ENCODE measurements at regions of chr2 and their contacts with region 1.

Region 1: DNA sequence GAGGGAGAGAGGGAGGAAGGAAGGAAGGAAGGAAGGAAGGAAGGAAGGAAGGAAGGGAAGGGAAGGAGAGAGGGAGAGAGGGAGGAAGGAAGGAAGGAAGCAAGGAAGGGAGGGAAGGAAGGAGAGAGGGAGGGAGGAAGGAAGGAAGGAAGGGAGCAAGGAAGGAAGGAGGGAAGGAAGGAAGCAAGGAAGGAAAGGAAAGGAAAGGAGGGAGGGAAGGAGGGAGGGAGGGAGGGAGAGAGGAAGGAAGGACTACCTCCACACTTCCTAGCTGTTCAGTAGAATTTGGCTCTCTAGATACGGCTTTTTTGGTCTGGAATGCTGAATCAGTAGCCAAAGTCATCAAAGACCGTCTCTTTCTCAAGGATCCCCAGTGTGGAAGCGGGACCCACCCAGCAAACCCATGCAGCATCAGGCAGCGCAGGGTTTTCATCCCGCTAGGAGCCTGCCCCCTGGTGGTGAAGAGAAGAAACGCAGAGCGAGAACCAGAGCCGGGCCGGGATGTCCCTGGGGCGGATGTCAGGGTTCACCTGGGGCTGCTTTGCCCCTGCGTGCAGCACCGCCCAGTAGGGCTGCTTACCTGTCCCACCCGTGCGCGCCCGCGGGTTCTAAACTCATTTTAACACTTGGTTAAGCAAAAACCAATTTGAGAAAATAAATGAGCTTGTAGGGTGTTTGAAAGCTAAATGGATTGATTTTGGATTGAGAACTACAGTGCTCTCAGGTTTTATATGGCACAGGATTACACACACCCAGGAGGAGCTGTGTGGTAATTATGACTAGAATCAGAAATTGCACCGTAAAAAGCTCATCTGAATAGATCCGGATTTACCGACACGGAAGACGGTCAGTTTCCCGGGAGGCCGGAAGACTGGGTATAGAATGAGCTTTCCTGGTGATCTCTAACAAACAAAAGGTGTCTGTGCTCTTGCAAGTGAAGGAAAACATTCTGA is 48.1 kb upstream of the ARL4C start:
- DNase-seq: peak; percentile 85
- H3K4me3 Mint-ChIP-seq: no peak overlapping the region
- H3K27ac Mint-ChIP-seq: no peak overlapping the region
- H3K4me1 Mint-ChIP-seq: no peaks in the 10 kb centered on the region
- H3K27me3 Mint-ChIP-seq: peaks cover 4% of the 10 kb centered on the region

Region 2: DNA sequence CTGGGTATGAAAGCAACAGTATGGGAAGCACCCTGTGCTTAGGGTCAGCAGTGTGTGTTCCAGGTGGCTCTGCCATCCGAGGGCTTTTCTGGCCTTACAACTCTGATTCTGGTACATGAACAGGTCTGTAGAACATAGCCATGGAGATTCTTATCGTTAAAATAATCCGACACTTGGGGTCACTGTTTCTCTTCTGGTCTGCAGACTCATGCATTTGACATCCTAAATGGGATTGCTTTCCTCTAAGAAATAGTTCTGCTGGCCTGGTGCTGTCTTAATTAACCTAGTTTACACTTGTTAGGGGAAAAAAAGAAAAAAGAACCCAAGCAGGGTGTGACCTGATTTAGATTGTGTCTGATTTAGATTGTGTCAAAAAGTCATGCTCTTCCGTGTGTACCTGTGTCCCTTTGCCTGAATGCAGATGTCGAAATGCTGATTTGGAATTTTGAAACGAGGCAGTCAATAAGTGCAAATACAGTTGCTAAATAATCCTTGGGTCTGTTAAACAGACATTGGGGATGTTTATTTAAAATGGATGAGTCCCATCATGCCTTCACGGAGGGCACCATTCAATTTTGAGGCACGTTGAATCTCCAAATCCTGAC is 568.1 kb before region 1 on chr2:
- CTCF ChIA-PET with region 1: interaction called, 8 read pairs
- POLR2A ChIA-PET with region 1: no interaction called
- intact Hi-C with region 1: loop called (anchors 2 kb)
- DNase-seq: no peak
- H3K4me3 Mint-ChIP-seq: no peak overlapping the region
- H3K27ac Mint-ChIP-seq: no peak overlapping the region
- H3K4me1 Mint-ChIP-seq: peaks cover 37% of the 10 kb centered on the region
- H3K27me3 Mint-ChIP-seq: no peaks in the 10 kb centered on the region

Region 3: DNA sequence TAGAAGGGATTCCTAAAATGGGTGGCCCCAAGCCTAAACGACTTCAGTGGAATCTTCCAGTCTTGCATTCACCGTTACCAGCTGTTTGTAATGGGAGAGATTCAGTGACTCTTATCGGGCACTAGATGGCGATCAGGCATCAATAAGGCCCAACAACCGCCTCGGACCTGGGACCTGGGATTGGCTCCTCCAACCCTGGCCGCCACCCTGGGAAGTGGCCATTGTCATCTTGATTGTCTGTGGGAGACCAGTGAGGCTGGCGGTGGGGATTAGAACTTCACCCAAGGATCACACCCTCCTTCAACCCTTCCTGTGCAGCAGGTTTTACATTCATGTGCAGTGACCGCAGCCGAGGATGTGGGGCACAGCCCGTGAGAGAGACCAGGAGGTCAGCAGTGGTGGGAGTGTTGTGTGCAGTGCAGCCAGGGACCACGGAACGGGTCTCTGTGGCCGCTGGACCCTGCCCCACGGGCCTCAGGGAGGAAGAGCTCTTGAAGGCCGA is 409.2 kb before region 1 on chr2:
- CTCF ChIA-PET with region 1: interaction called, 39 read pairs
- POLR2A ChIA-PET with region 1: no interaction called
- intact Hi-C with region 1: loop called (anchors 1 kb)
- DNase-seq: peak; percentile 70
- H3K4me3 Mint-ChIP-seq: no peak overlapping the region
- H3K27ac Mint-ChIP-seq: no peak overlapping the region
- H3K4me1 Mint-ChIP-seq: peaks cover 22% of the 10 kb centered on the region
- H3K27me3 Mint-ChIP-seq: no peaks in the 10 kb centered on the region

Region 4: GRCh38 chr2:234425619-234426603 is 119.0 kb before region 1 on chr2:
- CTCF ChIA-PET with region 1: no interaction called
- POLR2A ChIA-PET with region 1: no interaction called
- intact Hi-C with region 1: no loop called
- DNase-seq: peak; percentile 78
- H3K4me3 Mint-ChIP-seq: peak overlapping the region; percentile 73
- H3K27ac Mint-ChIP-seq: peak overlapping the region; percentile 81
- H3K4me1 Mint-ChIP-seq: peaks cover 79% of the 10 kb centered on the region
- H3K27me3 Mint-ChIP-seq: no peaks in the 10 kb centered on the region

Region 5: DNA sequence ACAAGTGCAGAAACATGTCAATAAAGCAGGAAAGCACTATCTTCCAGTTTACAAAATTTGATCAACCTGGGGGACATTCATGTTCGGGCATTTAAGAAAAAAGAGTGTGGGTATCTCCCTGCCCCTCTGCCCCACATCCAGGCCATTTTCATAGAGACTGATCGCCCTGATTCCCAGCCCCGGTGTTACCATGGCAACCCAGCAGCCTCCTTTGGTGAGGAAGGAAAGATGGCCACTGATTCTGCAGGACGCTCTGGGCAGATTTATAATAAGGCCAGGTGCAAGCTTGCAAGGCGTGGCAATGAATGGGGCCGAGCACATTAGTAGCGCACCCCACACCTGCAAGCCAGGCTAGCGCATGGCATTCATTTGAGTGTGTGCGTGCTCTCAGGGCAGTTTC is 11.3 kb before region 1 on chr2:
- CTCF ChIA-PET with region 1: interaction called, 19 read pairs
- POLR2A ChIA-PET with region 1: no interaction called
- intact Hi-C with region 1: no loop called
- DNase-seq: no peak
- H3K4me3 Mint-ChIP-seq: no peak overlapping the region
- H3K27ac Mint-ChIP-seq: no peak overlapping the region
- H3K4me1 Mint-ChIP-seq: no peaks in the 10 kb centered on the region
- H3K27me3 Mint-ChIP-seq: peaks cover 18% of the 10 kb centered on the region

Region 6: GRCh38 chr2:235116885-235117492 is 572.1 kb after region 1 on chr2:
- CTCF ChIA-PET with region 1: interaction called, 16 read pairs
- POLR2A ChIA-PET with region 1: no interaction called
- intact Hi-C with region 1: loop called (anchors 1 kb)
- DNase-seq: no peak
- H3K4me3 Mint-ChIP-seq: no peak overlapping the region
- H3K27ac Mint-ChIP-seq: no peak overlapping the region
- H3K4me1 Mint-ChIP-seq: no peaks in the 10 kb centered on the region
- H3K27me3 Mint-ChIP-seq: peaks cover 10% of the 10 kb centered on the region

Measured in activated CD4-positive, alpha-beta memory T cell treated with anti-CD3 and anti-CD28 coated beads for 36 hours (primary cell).